A673 (cell line): ENCODE measurements at regions of chr1 and their contacts with region 1.

Region 1: GRCh38 chr1:155978325-155978972 is at the start of gene ARHGEF2:
- DNase-seq: peak; percentile 89
- H3K4me3 ChIP-seq: peak within 1 kb of the TSS; percentile 95
- H3K27ac ChIP-seq: peak within 1 kb of the TSS; percentile 95
- H3K4me1 ChIP-seq: peaks cover 76% of the 10 kb centered on the region
- H3K27me3 ChIP-seq: no peaks in the 10 kb centered on the region
- CTCF ChIP-seq: peak; percentile 49; the same call in 1 of the 2 replicates
- total RNA-seq, gene ARHGEF2: 148 and 161 TPM in 2 replicates

Region 2: GRCh38 chr1:155919801-155920200 is 58.6 kb before region 1 on chr1:
- CTCF ChIA-PET with region 1: no interaction called
- POLR2A ChIA-PET with region 1: interaction called, 10 read pairs
- intact Hi-C with region 1: no loop called
- DNase-seq: no peak
- H3K4me3 ChIP-seq: no peak overlapping the region
- H3K27ac ChIP-seq: no peak overlapping the region
- H3K4me1 ChIP-seq: no peaks in the 10 kb centered on the region
- H3K27me3 ChIP-seq: no peaks in the 10 kb centered on the region
- CTCF ChIP-seq: no peak

Region 3: DNA sequence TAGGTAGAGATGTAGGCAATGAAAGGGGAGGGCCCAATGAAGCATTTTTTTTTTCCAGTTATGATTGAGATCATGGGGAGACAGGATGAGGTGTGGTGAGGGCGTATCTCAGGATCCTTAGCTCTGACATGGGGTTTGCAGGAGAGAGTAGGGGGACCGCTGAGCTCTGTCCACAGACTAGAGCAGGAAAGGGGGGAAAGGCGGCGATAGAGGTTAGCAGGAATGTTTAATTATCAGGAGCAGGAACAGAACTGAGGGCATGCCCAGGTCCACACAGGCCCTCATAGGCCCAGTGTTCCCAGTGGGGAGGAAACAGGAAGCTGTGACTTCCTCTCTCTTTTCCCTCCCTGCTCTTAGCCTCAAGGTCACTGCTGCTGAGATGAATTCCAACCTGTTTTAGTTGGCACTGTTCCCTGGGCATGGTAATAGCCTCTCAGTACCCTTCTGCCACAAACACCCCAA is 37.9 kb before region 1 on chr1:
- CTCF ChIA-PET with region 1: interaction called, 7 read pairs
- POLR2A ChIA-PET with region 1: interaction called, 17 read pairs
- intact Hi-C with region 1: loop called (anchors 5 kb)
- DNase-seq: peak; percentile 67
- H3K4me3 ChIP-seq: no peak overlapping the region
- H3K27ac ChIP-seq: peak overlapping the region; percentile 71
- H3K4me1 ChIP-seq: peaks cover 23% of the 10 kb centered on the region
- H3K27me3 ChIP-seq: no peaks in the 10 kb centered on the region
- CTCF ChIP-seq: no peak